ENCODE measurements at regions of chr4 and their contacts with region 1.

Region 1: DNA sequence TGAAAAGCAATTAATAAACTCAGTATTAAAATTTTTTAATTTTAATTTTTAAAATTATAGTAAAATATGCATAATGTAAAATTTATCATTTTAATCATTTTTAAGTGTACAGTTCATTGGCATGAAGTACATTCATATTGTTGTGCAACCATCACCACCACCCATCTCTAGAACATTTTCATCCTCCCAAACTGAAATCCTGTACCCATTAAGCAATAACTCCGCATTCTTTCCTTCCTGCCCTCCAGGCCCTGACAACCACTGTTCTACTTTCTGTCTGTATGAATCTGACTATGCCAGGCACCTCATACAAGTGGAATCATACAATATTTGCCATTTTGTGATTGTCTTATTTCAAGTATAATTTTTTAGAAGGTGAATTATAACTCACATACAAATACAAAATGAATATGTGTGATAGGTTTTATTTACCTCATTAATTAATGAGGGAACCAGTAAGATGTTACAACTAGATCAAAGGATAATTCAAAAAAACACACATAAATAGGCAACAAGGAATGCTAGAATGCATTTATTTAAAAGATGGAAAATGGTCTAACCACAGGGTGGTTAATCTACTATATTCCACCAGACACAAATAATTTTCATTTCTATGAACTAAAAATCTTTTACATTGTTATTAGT is 13.1 kb upstream of the AFF1 start:
- DNase-seq: no peak
- H3K4me3 ChIP-seq: no peak overlapping the region
- H3K27ac ChIP-seq: no peak overlapping the region
- H3K4me1 ChIP-seq: no peaks in the 10 kb centered on the region
- H3K27me3 ChIP-seq: no peaks in the 10 kb centered on the region
- CTCF ChIP-seq: no peak
- EP300 ChIP-seq: no peak
- RAD21 ChIP-seq: no peak

Region 2: DNA sequence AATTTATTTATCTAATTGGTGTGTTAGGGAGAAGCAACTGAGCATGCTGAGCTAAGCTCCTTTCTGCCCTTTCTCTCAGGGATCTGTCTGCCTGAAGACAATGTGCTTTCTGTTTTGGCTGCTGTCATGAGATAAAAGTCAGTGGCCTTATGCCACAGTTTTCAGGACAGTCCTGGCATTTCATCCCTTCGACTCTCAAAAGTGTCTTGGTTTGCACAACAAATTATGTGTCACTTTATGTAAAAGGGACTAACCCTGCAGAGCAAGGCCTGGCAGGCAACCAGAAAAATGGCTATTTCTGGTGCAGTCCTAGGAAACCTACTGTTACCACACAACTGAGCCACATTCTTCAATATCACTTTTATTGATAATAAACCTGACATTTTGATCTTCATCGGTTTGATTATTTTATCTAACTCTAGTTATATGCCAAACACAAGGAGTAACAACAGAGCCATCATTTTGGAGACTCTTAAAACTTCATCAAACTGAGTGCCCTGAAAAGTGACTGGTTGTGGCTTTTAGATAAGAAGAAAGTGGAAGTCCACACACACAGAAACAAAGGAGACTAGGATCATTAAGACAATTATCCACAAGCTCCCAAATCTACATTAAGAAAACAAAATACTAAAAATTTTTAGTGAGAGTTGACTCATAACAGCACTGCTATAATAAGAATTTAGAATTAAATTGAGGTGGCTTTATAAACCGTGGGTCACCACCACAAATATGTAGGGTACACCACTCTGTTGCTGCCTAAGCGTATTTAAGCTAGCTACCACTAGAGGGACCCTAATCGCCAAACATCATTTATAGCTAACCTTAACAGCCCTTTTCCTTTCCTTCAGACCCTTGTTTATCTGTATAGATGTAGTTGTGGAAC is 423.5 kb before region 1 on chr4:
- CTCF ChIA-PET with region 1: interaction called, 19 read pairs
- POLR2A ChIA-PET with region 1: no interaction called
- DNase-seq: peak; percentile 47
- H3K4me3 ChIP-seq: no peak overlapping the region; a peak in 1 of 4 replicates
- H3K27ac ChIP-seq: no peak overlapping the region
- H3K4me1 ChIP-seq: peaks cover 3 to 20% of the 10 kb centered on the region in 2 experiments; a peak in 3 of 4 replicates
- H3K27me3 ChIP-seq: no peaks in the 10 kb centered on the region
- CTCF ChIP-seq: peak; percentile 93
- EP300 ChIP-seq: no peak
- RAD21 ChIP-seq: peak; percentile 88

Region 3: GRCh38 chr4:86730310-86730709 is 191.4 kb before region 1 on chr4:
- CTCF ChIA-PET with region 1: no interaction called
- POLR2A ChIA-PET with region 1: no interaction called
- DNase-seq: no peak
- H3K4me3 ChIP-seq: no peak overlapping the region
- H3K27ac ChIP-seq: no peak overlapping the region
- H3K4me1 ChIP-seq: no peaks in the 10 kb centered on the region
- H3K27me3 ChIP-seq: no peaks in the 10 kb centered on the region
- CTCF ChIP-seq: no peak
- EP300 ChIP-seq: no peak
- RAD21 ChIP-seq: no peak

Region 4: DNA sequence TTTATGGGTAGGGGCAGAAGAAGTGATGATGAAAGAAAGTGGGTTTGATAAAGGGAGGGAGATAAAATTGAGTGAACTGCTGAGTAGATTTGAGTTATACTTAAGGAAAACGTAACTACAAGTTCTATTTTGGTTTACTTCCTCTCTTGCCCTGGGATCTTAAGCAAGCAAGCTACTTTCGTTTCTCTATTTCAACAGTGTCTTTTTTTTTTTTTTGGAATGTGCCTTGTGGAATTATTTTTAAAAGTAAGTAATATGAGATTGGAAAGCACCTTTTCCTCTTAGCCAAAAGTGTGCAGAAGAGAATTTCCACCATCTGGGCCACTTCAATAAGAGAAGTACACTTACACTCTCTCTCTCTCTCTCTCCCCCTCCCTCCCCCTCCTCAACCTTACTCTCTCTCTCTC is 13.5 kb before region 1 on chr4:
- CTCF ChIA-PET with region 1: interaction called, 20 read pairs
- POLR2A ChIA-PET with region 1: no interaction called
- DNase-seq: no peak
- H3K4me3 ChIP-seq: no peak overlapping the region
- H3K27ac ChIP-seq: no peak overlapping the region
- H3K4me1 ChIP-seq: no peaks in the 10 kb centered on the region
- H3K27me3 ChIP-seq: no peaks in the 10 kb centered on the region
- CTCF ChIP-seq: no peak
- EP300 ChIP-seq: no peak
- RAD21 ChIP-seq: no peak

Region 5: DNA sequence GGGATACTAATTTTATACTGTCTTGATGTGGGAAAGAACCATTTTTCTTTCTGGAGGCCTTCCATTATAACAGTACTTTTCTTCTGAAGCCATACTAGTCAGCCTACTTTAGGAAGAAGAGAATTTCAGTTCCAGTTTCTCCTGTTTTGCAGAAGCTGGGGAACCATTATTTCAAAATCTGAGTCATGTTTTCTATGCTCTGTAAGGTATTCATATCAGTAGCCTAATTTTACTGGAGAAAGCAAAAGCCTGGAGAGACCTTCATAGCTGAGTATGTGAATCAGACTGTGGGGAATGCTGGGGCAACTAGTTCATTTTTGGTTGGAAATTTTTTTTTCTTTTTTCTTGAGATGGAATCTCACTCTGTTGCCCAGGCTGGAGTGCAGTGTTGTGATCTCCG is 35.5 kb after region 1 on chr4:
- CTCF ChIA-PET with region 1: interaction called, 10 read pairs
- POLR2A ChIA-PET with region 1: no interaction called
- DNase-seq: no peak
- H3K4me3 ChIP-seq: no peak overlapping the region
- H3K27ac ChIP-seq: peak overlapping the region in 1 of 2 experiments; percentile 37; a peak in 2 of 4 replicates
- H3K4me1 ChIP-seq: peaks cover 0 to 4% of the 10 kb centered on the region in 2 experiments; a peak in 2 of 4 replicates
- H3K27me3 ChIP-seq: no peaks in the 10 kb centered on the region
- CTCF ChIP-seq: no peak
- EP300 ChIP-seq: no peak
- RAD21 ChIP-seq: no peak

Region 6: GRCh38 chr4:87058356-87059073 is 136.8 kb after region 1 on chr4:
- CTCF ChIA-PET with region 1: interaction called, 14 read pairs
- POLR2A ChIA-PET with region 1: no interaction called
- DNase-seq: no peak
- H3K4me3 ChIP-seq: no peak overlapping the region
- H3K27ac ChIP-seq: no peak overlapping the region
- H3K4me1 ChIP-seq: peaks cover 2 to 4% of the 10 kb centered on the region in 2 experiments; a peak in 1 of 4 replicates
- H3K27me3 ChIP-seq: no peaks in the 10 kb centered on the region
- CTCF ChIP-seq: no peak
- EP300 ChIP-seq: no peak
- RAD21 ChIP-seq: no peak

Region 7: DNA sequence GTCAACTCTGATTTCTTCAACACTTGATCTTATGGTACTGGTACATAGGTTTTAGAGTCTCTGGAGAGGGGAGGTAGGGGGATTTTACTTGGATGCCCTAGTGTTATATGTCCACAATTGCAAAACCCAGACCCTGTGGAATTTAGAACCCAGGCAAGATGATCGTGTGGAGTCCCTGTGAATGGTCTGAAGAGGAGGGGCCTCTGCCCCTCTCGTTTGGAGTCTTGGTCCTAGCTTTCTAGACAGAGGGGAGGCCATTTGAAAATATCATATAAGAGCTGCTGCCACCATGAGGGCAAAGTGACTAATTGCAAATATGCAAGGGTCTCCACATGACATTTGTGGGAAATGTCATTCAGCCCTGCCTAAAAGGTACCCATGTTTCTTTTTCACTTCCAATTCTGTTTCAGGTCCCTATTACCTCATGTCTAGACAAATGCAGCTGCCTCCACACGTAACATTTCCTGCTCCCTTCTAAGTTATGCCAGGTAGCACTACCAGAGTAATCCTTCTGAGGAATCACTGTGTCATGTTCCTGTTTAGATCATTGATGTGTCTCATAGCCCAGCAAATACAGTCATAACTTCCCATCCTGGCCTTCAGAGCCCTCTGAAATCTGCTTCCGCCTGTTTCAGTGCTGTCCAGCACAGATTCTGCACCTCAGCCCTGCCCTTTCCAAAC is 171.9 kb after region 1 on chr4:
- CTCF ChIA-PET with region 1: interaction called, 138 read pairs
- POLR2A ChIA-PET with region 1: interaction called, 5 read pairs
- DNase-seq: peak; percentile 67
- H3K4me3 ChIP-seq: no peak overlapping the region
- H3K27ac ChIP-seq: peak overlapping the region in 1 of 2 experiments; percentile 47; a peak in 2 of 4 replicates
- H3K4me1 ChIP-seq: peaks cover 9 to 10% of the 10 kb centered on the region in 2 experiments; a peak in 3 of 4 replicates
- H3K27me3 ChIP-seq: no peaks in the 10 kb centered on the region
- CTCF ChIP-seq: peak; percentile 71
- EP300 ChIP-seq: no peak
- RAD21 ChIP-seq: peak; percentile 88

Region 8: GRCh38 chr4:87150498-87151261 is 228.9 kb after region 1 on chr4:
- CTCF ChIA-PET with region 1: interaction called, 16 read pairs
- POLR2A ChIA-PET with region 1: no interaction called
- DNase-seq: peak; percentile 57
- H3K4me3 ChIP-seq: no peak overlapping the region
- H3K27ac ChIP-seq: no peak overlapping the region
- H3K4me1 ChIP-seq: no peaks in the 10 kb centered on the region
- H3K27me3 ChIP-seq: no peaks in the 10 kb centered on the region
- CTCF ChIP-seq: peak; percentile 90
- EP300 ChIP-seq: no peak
- RAD21 ChIP-seq: peak; percentile 93

Measured in SK-N-SH (cell line).